ENCODE measurements at regions of chr1 and their contacts with region 1.

Region 1: DNA sequence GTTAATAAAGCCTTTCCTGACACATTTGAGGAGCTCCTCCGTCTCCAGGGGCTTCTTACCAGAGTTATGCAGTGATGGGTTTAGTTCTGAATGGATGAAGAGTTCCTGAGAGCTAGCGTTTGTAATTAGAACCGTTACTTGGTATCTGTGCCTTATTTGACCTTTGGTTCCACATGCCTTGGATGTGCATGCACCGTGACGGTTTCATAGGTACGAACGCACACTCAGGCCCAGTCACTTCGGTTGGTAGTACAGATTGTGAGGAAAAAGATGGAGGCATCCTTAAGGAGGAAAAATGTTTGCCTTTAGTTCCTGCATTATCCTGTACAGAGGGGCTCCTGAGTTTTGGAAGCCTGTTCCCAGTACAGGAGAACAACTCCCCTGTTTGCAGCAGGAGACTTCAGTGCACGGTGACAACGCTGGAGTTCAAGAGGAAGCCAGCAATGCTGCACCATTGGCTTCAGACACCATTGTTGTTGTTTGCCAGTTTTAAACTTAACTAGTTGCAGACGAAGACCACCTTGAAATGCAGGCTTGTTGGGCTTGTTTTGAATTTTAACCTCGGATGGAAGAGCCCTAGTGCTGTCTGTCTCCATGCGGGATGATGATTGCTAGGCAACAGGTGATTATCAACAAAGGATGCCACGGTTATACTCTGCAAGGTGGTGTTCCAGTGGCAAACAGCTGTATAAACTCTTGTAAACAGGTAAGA is 8.2 kb downstream of the RBM15 start:
- DNase-seq: no peak
- H3K4me3 Mint-ChIP-seq: peak overlapping the region; percentile 2
- H3K27ac Mint-ChIP-seq: peak overlapping the region; percentile 25
- H3K4me1 Mint-ChIP-seq: peaks cover 85% of the 10 kb centered on the region
- H3K27me3 Mint-ChIP-seq: no peaks in the 10 kb centered on the region

Region 2: DNA sequence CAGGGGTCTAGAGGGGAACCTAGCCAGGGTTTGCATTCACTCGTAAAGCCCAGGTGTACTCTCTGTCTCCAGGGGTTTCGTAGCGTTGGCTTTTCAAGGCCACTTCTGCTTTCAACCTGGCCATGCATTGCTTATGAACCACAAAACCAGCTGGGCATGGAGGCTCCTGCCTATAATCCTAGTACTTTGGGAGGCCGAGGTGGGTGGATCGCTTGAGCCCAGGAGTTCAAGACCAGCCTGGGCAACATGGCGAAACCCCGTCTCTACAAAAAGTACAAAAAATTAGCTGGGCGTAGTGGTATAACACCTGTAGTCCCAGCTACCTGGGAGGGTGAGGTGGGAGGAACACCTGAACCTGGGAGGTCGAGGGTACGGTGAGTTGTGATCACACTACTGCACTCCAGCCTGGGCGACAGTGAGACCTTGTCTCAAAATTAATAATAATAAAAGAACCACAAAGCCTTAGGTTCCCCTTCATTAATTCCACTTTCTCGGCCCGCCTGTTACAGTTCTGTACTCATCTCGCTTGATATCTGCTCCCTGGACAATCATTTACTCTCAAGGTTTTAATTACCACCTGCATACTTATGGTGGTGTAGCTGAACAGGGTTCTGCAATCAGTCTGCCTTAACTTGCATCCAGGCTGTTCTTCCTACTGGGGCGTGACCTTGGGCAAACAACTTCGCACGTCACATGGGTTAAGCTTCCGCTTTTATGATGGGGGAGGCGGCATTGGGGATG is 37.4 kb after region 1 on chr1:
- intact Hi-C with region 1: loop called (anchors 5 kb)
- DNase-seq: no peak
- H3K4me3 Mint-ChIP-seq: no peak overlapping the region
- H3K27ac Mint-ChIP-seq: no peak overlapping the region
- H3K4me1 Mint-ChIP-seq: peaks cover 21% of the 10 kb centered on the region
- H3K27me3 Mint-ChIP-seq: no peaks in the 10 kb centered on the region

Region 3: GRCh38 chr1:110407260-110408210 is 60.2 kb after region 1 on chr1 and contains the start of gene LAMTOR5:
- intact Hi-C with region 1: loop called (anchors 2 kb)
- DNase-seq: peak; percentile 90
- H3K4me3 Mint-ChIP-seq: peak within 1 kb of the TSS; percentile 100
- H3K27ac Mint-ChIP-seq: peak within 1 kb of the TSS; percentile 100
- H3K4me1 Mint-ChIP-seq: peaks cover 22% of the 10 kb centered on the region
- H3K27me3 Mint-ChIP-seq: no peaks in the 10 kb centered on the region
- total RNA-seq, gene LAMTOR5: 163 and 184 TPM in 2 replicates